ENCODE measurements at regions of chr10 and their contacts with region 1.

Region 1: DNA sequence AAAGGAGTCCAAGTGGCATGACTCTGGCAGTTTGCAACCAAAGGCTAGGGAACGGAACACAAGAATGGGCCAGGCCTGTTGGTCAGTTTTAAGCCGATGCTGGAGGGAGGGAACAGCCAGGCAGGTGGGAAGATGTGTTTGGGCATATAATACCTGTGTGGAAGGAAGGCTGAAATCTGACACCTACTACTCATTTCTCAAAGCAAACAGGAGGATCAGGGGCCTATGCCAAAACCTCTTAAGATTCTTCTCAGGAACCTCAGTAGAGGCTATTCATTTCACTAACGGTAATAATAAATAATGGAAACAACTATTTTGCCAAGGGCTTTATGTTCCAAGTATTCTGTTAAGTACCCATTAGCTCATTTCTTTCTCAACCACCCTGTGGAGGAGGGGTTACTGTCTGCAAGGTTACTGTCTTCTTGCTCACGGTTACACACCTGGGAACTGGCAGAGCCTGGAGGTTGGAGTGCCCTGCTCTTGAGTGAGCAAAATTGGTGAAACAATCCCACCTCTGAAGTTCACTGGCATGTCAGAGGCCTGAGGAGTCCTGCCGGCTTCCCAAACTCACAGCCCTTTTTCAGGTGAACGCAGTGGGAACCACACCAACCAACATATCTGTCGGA is 35.5 kb downstream of the GOT1 start:
- DNase-seq: no peak
- H3K4me3 ChIP-seq: no peak overlapping the region
- H3K27ac ChIP-seq: no peak overlapping the region
- H3K4me1 ChIP-seq: no peaks in the 10 kb centered on the region
- H3K27me3 ChIP-seq: no peaks in the 10 kb centered on the region
- CTCF ChIP-seq: no peak

Region 2: DNA sequence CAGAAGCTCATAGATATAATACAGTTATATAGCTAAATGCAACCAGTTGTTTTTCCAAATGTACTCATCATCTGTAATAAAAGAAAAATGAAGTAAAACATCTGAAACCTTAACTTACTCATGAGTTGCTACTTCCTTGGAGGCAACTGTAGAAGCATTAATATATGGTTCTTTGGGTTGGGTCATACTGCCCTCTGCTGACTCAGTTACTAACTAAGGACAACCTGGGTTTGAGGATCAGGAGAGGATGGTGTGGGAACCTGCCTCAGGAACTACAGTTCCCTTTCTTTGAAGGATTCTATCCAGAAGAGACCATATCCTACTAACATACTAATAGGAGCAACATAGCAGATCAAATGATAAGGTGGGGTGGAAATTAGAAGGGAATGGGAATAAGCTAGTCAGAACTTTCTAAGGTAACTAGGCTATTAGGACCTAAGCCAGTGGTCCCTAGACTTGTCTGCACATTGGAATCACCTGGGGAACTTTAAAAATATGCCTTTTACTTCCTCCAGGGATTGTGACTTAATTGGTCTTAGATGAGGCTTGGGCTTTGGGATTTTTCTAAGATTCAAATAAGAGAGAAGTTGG is 316.4 kb after region 1 on chr10:
- intact Hi-C with region 1: loop called (anchors 5 kb)
- DNase-seq: no peak
- H3K4me3 ChIP-seq: no peak overlapping the region
- H3K27ac ChIP-seq: no peak overlapping the region
- H3K4me1 ChIP-seq: no peaks in the 10 kb centered on the region
- H3K27me3 ChIP-seq: no peaks in the 10 kb centered on the region
- CTCF ChIP-seq: peak in 2 of 3 experiments; percentile 12 to 34